ENCODE measurements at regions of chr6 and their contacts with region 1.

Region 1: GRCh38 chr6:111997078-111997852 is 56.6 kb upstream of the CCN6 start:
- DNase-seq: peak; percentile 73
- H3K4me3 ChIP-seq: no peak overlapping the region
- H3K27ac ChIP-seq: no peak overlapping the region
- H3K4me1 ChIP-seq: peaks cover 30% of the 10 kb centered on the region
- H3K27me3 ChIP-seq: no peaks in the 10 kb centered on the region
- CTCF ChIP-seq: peak; percentile 86 to 89

Region 2: GRCh38 chr6:111709615-111710398 is 287.5 kb before region 1 on chr6:
- CTCF ChIA-PET with region 1: interaction called, 4 read pairs
- dilution Hi-C with region 1: no loop called
- in situ Hi-C with region 1: loop called in 1 of 2 experiments (anchors 5 kb)
- intact Hi-C with region 1: loop called (anchors 1 kb)
- DNase-seq: peak; percentile 54
- H3K4me3 ChIP-seq: peak overlapping the region in 2 of 3 experiments; percentile 11 to 22
- H3K27ac ChIP-seq: peak overlapping the region; percentile 28
- H3K4me1 ChIP-seq: peaks cover 8% of the 10 kb centered on the region
- H3K27me3 ChIP-seq: no peaks in the 10 kb centered on the region
- CTCF ChIP-seq: peak; percentile 56 to 61

Region 3: GRCh38 chr6:111804627-111805235 is 192.5 kb before region 1 on chr6:
- CTCF ChIA-PET with region 1: no interaction called
- dilution Hi-C with region 1: no loop called
- in situ Hi-C with region 1: no loop called
- intact Hi-C with region 1: loop called (anchors 5 kb)
- DNase-seq: no peak
- H3K4me3 ChIP-seq: no peak overlapping the region
- H3K27ac ChIP-seq: no peak overlapping the region
- H3K4me1 ChIP-seq: peaks cover 18% of the 10 kb centered on the region
- H3K27me3 ChIP-seq: no peaks in the 10 kb centered on the region
- CTCF ChIP-seq: no peak

Region 4: GRCh38 chr6:111873178-111874024 is 123.9 kb before region 1 on chr6 and contains the start of gene FYN:
- CTCF ChIA-PET with region 1: no interaction called
- dilution Hi-C with region 1: loop called (anchors 10 kb)
- in situ Hi-C with region 1: loop called in 1 of 2 experiments (anchors 10 kb)
- intact Hi-C with region 1: loop called (anchors 1 kb)
- DNase-seq: peak; percentile 96
- H3K4me3 ChIP-seq: peak within 1 kb of the TSS; percentile 65 to 88 (median 78)
- H3K27ac ChIP-seq: peak within 1 kb of the TSS; percentile 31
- H3K4me1 ChIP-seq: peaks cover 15% of the 10 kb centered on the region
- H3K27me3 ChIP-seq: no peaks in the 10 kb centered on the region
- CTCF ChIP-seq: peak; percentile 29 to 46
- total RNA-seq, gene FYN: 58.0 to 136 TPM

Region 5: DNA sequence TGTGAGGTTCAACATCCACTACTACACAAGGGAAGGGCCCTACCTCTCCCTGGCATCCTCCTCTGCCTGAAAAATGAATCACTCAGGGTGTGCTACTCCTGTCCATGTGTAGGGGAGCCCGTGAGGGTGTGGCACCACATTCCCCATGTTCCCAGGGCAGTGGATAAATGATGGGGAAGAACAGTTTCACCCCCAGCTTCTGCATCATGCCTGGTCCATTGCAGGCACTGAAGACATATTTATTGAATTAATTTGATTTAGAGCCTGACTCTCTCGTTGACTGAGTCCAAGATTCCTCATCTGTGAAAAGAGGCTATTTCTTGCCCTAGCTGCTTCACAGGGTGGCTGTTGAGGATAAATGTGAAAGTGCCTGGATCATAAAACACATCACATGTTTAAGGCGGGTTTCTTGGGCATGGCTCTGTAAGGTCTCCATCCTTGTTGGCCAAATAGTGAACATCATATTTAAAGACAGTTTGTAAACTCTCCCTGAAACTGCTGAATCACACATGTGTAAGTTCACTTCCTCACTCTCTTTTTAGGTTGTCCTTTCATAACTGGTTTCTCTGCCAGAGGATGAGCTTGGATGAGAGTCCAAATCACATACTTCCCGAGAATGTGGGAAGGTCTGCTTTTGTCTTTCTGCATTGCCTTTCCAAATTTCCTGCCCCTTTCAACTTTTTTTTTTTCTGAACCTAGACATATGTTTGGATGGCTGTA is 44.3 kb before region 1 on chr6:
- CTCF ChIA-PET with region 1: no interaction called
- dilution Hi-C with region 1: no loop called
- in situ Hi-C with region 1: no loop called
- intact Hi-C with region 1: loop called (anchors 1 kb)
- DNase-seq: peak; percentile 70
- H3K4me3 ChIP-seq: no peak overlapping the region
- H3K27ac ChIP-seq: peak overlapping the region; percentile 39
- H3K4me1 ChIP-seq: peaks cover 16% of the 10 kb centered on the region
- H3K27me3 ChIP-seq: no peaks in the 10 kb centered on the region
- CTCF ChIP-seq: no peak

Region 6: GRCh38 chr6:111985202-111985731 is 12.0 kb before region 1 on chr6:
- CTCF ChIA-PET with region 1: no interaction called
- dilution Hi-C with region 1: no loop called
- in situ Hi-C with region 1: no loop called
- intact Hi-C with region 1: loop called (anchors 1 kb)
- DNase-seq: peak; percentile 98
- H3K4me3 ChIP-seq: no peak overlapping the region
- H3K27ac ChIP-seq: peak overlapping the region; percentile 94
- H3K4me1 ChIP-seq: peaks cover 56% of the 10 kb centered on the region
- H3K27me3 ChIP-seq: no peaks in the 10 kb centered on the region
- CTCF ChIP-seq: no peak

Region 7: GRCh38 chr6:112010328-112010727 is 13.1 kb after region 1 on chr6:
- CTCF ChIA-PET with region 1: no interaction called
- dilution Hi-C with region 1: no loop called
- in situ Hi-C with region 1: no loop called
- intact Hi-C with region 1: no loop called
- DNase-seq: peak; percentile 21
- H3K4me3 ChIP-seq: no peak overlapping the region
- H3K27ac ChIP-seq: no peak overlapping the region
- H3K4me1 ChIP-seq: peaks cover 11% of the 10 kb centered on the region
- H3K27me3 ChIP-seq: no peaks in the 10 kb centered on the region
- CTCF ChIP-seq: peak in 1 of 2 donors; percentile 53

Region 8: GRCh38 chr6:112163295-112164257 is 166.3 kb after region 1 on chr6:
- CTCF ChIA-PET with region 1: no interaction called
- dilution Hi-C with region 1: no loop called
- in situ Hi-C with region 1: no loop called
- intact Hi-C with region 1: no loop called
- DNase-seq: peak; percentile 39
- H3K4me3 ChIP-seq: no peak overlapping the region
- H3K27ac ChIP-seq: no peak overlapping the region
- H3K4me1 ChIP-seq: no peaks in the 10 kb centered on the region
- H3K27me3 ChIP-seq: no peaks in the 10 kb centered on the region
- CTCF ChIP-seq: peak; percentile 82 to 94

Measured in mammary epithelial cell (primary cell).